SK-N-SH (cell line): ENCODE measurements at regions of chr7 and their contacts with region 1.

Region 1: GRCh38 chr7:23181684-23182553 is at the start of gene NUP42:
- DNase-seq: peak; percentile 97
- H3K4me3 ChIP-seq: peak within 1 kb of the TSS; percentile 89 to 94
- H3K27ac ChIP-seq: peak within 1 kb of the TSS; percentile 88 to 96
- H3K4me1 ChIP-seq: peaks cover 8 to 13% of the 10 kb centered on the region in 2 experiments; a peak in 3 of 4 replicates
- H3K27me3 ChIP-seq: no peaks in the 10 kb centered on the region
- CTCF ChIP-seq: no peak
- EP300 ChIP-seq: peak; percentile 8 to 80; a peak in 3 of 4 replicates
- RAD21 ChIP-seq: peak; percentile 33
- polyA plus RNA-seq, gene NUP42: 22.7 and 38.1 TPM in 2 replicates

Region 2: GRCh38 chr7:23105644-23106056 is 76.3 kb before region 1 on chr7 and contains the start of gene KLHL7:
- CTCF ChIA-PET with region 1: interaction called, 10 read pairs
- POLR2A ChIA-PET with region 1: interaction called, 17 read pairs
- DNase-seq: peak; percentile 98
- H3K4me3 ChIP-seq: peak within 1 kb of the TSS; percentile 100
- H3K27ac ChIP-seq: peak within 1 kb of the TSS; percentile 90 to 96
- H3K4me1 ChIP-seq: peaks cover 0 to 20% of the 10 kb centered on the region in 2 experiments; a peak in 2 of 4 replicates
- H3K27me3 ChIP-seq: no peaks in the 10 kb centered on the region
- CTCF ChIP-seq: no peak
- EP300 ChIP-seq: no peak
- RAD21 ChIP-seq: no peak
- polyA plus RNA-seq, gene KLHL7: 30.8 and 31.6 TPM in 2 replicates

Region 3: GRCh38 chr7:23196306-23196705 is 14.4 kb after region 1 on chr7:
- CTCF ChIA-PET with region 1: interaction called, 20 read pairs
- POLR2A ChIA-PET with region 1: interaction called, 5 read pairs
- DNase-seq: no peak
- H3K4me3 ChIP-seq: no peak overlapping the region
- H3K27ac ChIP-seq: peak overlapping the region in 1 of 2 experiments; percentile 19; a peak in 1 of 4 replicates
- H3K4me1 ChIP-seq: peaks cover 0 to 7% of the 10 kb centered on the region in 2 experiments; a peak in 2 of 4 replicates
- H3K27me3 ChIP-seq: no peaks in the 10 kb centered on the region
- CTCF ChIP-seq: no peak
- EP300 ChIP-seq: no peak
- RAD21 ChIP-seq: no peak

Region 4: DNA sequence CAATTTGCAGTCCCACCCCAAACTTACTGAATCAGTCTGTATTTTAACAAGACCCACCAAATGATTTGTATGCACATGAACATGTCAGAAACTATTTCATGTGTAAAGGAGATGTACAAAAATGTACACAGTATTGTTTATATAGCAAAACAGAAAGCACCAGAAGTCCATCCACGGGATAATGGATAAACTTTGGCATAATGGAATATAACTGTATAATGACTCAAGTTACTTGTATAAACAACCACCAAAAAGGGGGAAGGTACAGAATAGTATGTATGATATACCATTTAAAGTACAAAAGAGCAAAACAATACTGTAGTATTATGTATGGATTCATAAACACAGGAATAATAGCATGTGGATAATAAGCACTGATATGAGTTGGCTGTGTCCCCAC is 22.3 kb after region 1 on chr7:
- CTCF ChIA-PET with region 1: interaction called, 20 read pairs
- POLR2A ChIA-PET with region 1: no interaction called
- DNase-seq: no peak
- H3K4me3 ChIP-seq: no peak overlapping the region
- H3K27ac ChIP-seq: no peak overlapping the region
- H3K4me1 ChIP-seq: peaks cover 0 to 14% of the 10 kb centered on the region in 2 experiments; a peak in 2 of 4 replicates
- H3K27me3 ChIP-seq: no peaks in the 10 kb centered on the region
- CTCF ChIP-seq: no peak
- EP300 ChIP-seq: no peak
- RAD21 ChIP-seq: no peak

Region 5: GRCh38 chr7:23261843-23262452 is 80.0 kb after region 1 on chr7:
- CTCF ChIA-PET with region 1: interaction called, 107 read pairs
- POLR2A ChIA-PET with region 1: no interaction called
- DNase-seq: peak; percentile 91
- H3K4me3 ChIP-seq: no peak overlapping the region; a peak in 1 of 4 replicates
- H3K27ac ChIP-seq: no peak overlapping the region
- H3K4me1 ChIP-seq: no peaks in the 10 kb centered on the region; a peak in 1 of 4 replicates
- H3K27me3 ChIP-seq: no peaks in the 10 kb centered on the region
- CTCF ChIP-seq: peak; percentile 99
- EP300 ChIP-seq: no peak
- RAD21 ChIP-seq: peak; percentile 90

Region 6: DNA sequence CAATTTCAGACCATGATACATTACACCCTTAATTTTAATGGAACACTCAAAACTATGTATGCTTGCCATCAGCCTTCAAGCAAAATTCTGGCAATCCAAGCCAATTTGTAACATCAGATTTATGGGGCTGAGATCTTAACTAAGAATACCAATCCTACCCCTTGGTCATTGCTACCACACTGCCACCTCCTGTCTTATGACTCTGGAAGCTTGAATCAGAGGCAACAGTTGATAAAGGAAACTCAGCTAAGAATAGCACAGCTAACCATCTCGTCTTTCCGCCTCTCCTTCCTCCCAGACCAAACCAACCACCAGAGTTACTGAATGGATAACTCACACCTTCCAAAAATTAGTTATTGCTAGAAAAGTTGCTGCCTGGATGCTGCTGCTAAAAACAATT is 280.9 kb after region 1 on chr7:
- CTCF ChIA-PET with region 1: interaction called, 19 read pairs
- POLR2A ChIA-PET with region 1: interaction called, 4 read pairs
- DNase-seq: peak; percentile 48
- H3K4me3 ChIP-seq: no peak overlapping the region
- H3K27ac ChIP-seq: peak overlapping the region in 1 of 2 experiments; percentile 28; a peak in 3 of 4 replicates
- H3K4me1 ChIP-seq: peaks cover 30 to 36% of the 10 kb centered on the region in 2 experiments
- H3K27me3 ChIP-seq: no peaks in the 10 kb centered on the region
- CTCF ChIP-seq: peak; percentile 65
- EP300 ChIP-seq: no peak; a peak in 1 of 4 replicates
- RAD21 ChIP-seq: peak; percentile 73

Region 7: GRCh38 chr7:23474094-23474828 is 292.3 kb after region 1 on chr7:
- CTCF ChIA-PET with region 1: interaction called, 11 read pairs
- POLR2A ChIA-PET with region 1: no interaction called
- DNase-seq: peak; percentile 94
- H3K4me3 ChIP-seq: peak overlapping the region; percentile 88 to 89
- H3K27ac ChIP-seq: peak overlapping the region; percentile 93 to 100
- H3K4me1 ChIP-seq: peaks cover 4 to 37% of the 10 kb centered on the region in 2 experiments; a peak in 3 of 4 replicates
- H3K27me3 ChIP-seq: no peaks in the 10 kb centered on the region
- CTCF ChIP-seq: no peak
- EP300 ChIP-seq: peak; percentile 5 to 34; a peak in 2 of 4 replicates
- RAD21 ChIP-seq: no peak; the same call in 1 of the 2 replicates